ENCODE measurements at regions of chr9 and their contacts with region 1.

Region 1: GRCh38 chr9:111870774-111871498 is 25.7 kb upstream of the UGCG start:
- DNase-seq: no peak

Region 2: DNA sequence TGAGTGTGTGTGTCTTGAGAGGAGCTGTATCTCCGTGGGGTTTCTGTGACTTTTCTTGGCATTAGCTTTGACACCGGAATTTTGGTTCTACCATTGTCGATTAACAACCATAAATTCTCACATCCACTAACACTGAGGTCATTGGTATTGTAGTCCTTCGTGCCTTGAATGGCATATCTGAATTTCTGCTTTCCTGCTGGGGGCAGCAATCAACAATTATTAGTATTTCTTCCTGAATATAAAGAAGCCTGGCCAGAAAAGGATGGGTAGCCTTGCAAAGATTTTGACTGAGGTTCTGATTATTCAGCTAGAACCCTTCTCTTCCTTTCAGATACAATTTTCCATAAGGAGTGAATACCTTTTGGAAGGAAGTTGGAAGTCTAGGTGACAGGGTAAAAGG is 42.7 kb before region 1 on chr9:
- intact Hi-C with region 1: no loop called
- DNase-seq: no peak

Region 3: DNA sequence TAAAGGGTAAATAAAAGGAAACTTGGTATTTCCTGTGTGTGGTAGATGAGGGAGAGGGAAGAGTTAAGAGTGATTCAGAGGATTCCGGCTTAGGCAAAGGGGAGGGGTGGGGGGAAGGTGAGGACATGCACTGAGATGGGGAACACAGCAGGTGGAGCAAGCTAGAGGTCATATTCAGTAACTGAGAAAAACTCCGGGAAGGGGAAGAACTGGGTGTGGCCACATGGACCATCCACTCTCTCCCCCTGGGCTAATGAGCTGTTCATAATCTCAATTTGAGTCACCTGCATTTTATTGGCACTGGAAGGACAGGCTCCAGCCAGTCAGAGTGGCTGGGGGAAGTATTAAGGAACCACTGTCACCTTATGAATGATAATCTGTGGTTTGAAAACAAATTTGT is 19.4 kb before region 1 on chr9:
- intact Hi-C with region 1: loop called in 1 of 2 experiments (anchors 1 kb)
- DNase-seq: no peak

Measured in posterior vena cava (tissue), 2 donors.